Natural killer cell (primary cell): ENCODE measurements at regions of chr4 and their contacts with region 1.

Region 1: DNA sequence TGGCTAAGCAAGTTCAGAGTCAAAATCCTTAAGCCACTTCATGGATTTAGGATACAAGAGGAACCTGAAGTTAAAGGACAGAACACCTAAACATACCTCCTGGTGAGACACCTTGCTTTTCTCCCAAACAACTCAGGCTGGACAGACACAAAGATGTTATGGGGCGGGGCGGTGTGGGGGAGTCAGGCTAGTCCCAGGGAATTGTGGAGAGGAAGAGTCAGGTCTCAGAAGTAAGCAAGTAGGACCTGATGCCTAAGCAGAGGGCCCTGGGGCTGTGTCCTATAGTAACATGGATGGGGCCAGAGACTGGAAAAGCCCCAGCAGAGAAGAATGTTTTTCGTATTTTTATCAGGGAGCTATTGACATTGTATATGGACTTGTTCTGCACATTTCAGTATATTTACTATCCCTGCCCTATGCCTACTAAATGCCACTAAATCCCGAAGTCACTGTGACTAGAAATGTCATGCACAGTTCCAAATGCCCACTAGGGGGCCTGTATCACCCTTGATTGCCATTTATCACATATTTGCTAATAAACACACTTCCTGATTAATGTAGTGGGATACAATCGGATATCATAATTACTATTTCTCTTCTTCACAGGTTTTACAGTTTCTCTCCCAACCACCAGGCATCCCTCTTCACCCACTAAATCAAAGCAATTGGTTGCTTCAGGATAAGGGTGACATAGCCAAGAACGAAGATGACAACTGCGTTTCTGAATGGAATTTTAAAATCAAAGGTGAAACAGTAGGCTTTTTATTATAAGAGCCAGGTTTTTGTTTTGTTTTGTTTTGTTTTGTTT is 23.8 kb upstream of the ARHGAP10 start:
- DNase-seq: peak; percentile 27 to 79
- ATAC-seq: peak; percentile 65 to 86 (median 80)
- H3K4me3 ChIP-seq: no peak overlapping the region
- H3K4me3 Mint-ChIP-seq: no peak overlapping the region
- H3K27ac ChIP-seq: no peak overlapping the region
- H3K27ac Mint-ChIP-seq: no peak overlapping the region
- H3K4me1 ChIP-seq: no peaks in the 10 kb centered on the region
- H3K4me1 Mint-ChIP-seq: peaks cover 8 to 9% of the 10 kb centered on the region in 2 donors
- H3K27me3 ChIP-seq: no peaks in the 10 kb centered on the region
- H3K27me3 Mint-ChIP-seq: peaks cover 0 to 3% of the 10 kb centered on the region in 2 donors
- CTCF ChIP-seq: peak; percentile 92

Region 2: DNA sequence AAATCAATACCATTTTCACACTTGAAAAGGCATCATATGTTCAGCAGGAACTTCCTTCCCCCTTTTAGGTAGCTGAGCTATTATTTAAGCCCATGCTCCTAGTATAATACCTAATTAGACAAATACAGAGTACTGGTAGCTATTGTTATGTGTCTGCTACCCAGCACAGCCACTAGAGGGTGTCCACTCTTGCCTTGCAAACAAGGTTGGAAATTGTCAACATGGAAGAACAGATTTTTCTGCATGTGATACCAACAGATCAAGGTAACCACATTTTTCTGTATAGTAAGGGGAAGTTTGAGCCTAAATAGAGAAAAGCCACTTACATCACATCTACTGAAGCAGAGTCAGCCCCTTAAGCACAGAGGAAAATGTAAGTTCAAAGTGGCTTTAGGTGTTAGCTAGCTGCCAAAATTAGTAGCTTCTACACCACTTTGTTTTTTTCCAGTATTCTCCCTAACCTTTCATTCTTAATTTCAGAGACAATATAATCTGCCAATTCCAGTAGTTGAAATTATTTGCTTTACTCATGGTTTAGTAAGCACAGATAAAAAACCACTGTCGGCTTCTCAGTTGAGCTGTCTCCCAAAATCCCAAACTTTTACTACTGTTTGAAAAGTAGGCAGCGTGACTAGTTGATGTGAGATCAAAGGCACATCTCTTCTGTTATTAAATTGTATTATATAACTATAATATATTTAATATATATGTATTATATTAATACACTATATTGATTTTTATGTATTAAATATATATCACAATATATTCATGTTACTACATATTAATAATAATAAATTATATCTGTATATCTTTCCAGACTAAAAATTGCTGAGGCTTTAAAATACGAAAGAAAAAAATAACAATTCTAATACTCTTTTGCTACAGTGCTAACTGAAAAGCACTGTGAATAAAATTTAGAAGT is 189.0 kb before region 1 on chr4:
- intact Hi-C with region 1: loop called (anchors 2 kb)
- DNase-seq: peak in 1 of 2 donors; percentile 66
- ATAC-seq: peak in 2 of 3 donors; percentile 60 to 71
- H3K4me3 ChIP-seq: no peak overlapping the region
- H3K4me3 Mint-ChIP-seq: no peak overlapping the region
- H3K27ac ChIP-seq: no peak overlapping the region
- H3K27ac Mint-ChIP-seq: no peak overlapping the region
- H3K4me1 ChIP-seq: no peaks in the 10 kb centered on the region
- H3K4me1 Mint-ChIP-seq: no peaks in the 10 kb centered on the region
- H3K27me3 ChIP-seq: no peaks in the 10 kb centered on the region
- H3K27me3 Mint-ChIP-seq: peaks cover 7 to 12% of the 10 kb centered on the region in 2 donors
- CTCF ChIP-seq: peak; percentile 73

Region 3: DNA sequence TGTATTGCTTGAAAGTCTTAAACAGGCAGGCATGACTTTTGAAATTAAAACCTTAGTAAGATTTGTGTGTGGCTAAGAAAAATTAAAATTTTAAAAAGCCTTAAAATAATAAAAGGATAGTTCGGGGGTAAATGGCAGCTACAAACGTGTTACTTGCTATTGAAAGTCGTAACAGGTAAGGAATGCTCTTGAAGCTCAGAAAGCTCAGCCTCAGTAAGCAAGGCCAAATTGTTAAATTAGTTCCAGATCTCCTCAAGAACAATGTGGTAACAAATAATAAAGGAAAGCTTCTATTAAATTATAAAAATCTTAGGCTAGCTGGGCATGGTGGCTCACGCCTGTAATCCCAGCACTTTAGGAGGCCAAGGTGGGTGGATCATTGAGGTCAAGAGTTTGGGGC is 49.6 kb before region 1 on chr4:
- intact Hi-C with region 1: no loop called
- DNase-seq: no peak
- ATAC-seq: no peak
- H3K4me3 ChIP-seq: no peak overlapping the region
- H3K4me3 Mint-ChIP-seq: no peak overlapping the region
- H3K27ac ChIP-seq: no peak overlapping the region
- H3K27ac Mint-ChIP-seq: no peak overlapping the region
- H3K4me1 ChIP-seq: no peaks in the 10 kb centered on the region
- H3K4me1 Mint-ChIP-seq: no peaks in the 10 kb centered on the region
- H3K27me3 ChIP-seq: no peaks in the 10 kb centered on the region
- H3K27me3 Mint-ChIP-seq: no peaks in the 10 kb centered on the region
- CTCF ChIP-seq: no peak

Region 4: DNA sequence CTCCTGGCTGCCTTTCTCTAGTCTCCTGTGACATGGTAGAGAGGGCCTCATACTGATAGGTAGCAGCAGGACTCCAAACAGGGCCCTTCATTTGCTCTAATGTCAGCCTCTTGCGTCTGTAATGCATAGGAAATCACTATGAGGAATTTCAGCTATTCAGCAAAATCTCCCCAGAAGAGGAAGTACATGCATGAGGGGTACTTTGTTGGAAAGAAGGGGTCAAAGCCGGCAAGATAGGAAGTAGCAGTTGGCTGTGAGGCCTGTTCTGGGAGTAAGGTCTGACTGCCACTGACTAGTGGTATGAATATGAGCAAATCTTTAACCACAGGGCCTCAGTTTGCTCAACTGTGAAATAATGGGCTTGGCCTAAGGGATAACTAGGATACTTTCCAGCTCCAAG is 307.0 kb after region 1 on chr4:
- intact Hi-C with region 1: no loop called
- DNase-seq: no peak
- ATAC-seq: no peak
- H3K4me3 ChIP-seq: no peak overlapping the region
- H3K4me3 Mint-ChIP-seq: no peak overlapping the region
- H3K27ac ChIP-seq: no peak overlapping the region
- H3K27ac Mint-ChIP-seq: no peak overlapping the region
- H3K4me1 ChIP-seq: no peaks in the 10 kb centered on the region
- H3K4me1 Mint-ChIP-seq: peaks cover 9 to 13% of the 10 kb centered on the region in 2 donors
- H3K27me3 ChIP-seq: no peaks in the 10 kb centered on the region
- H3K27me3 Mint-ChIP-seq: no peaks in the 10 kb centered on the region
- CTCF ChIP-seq: no peak